ENCODE measurements at regions of chr9 and their contacts with region 1.

Region 1: GRCh38 chr9:136122425-136123383 is 4.0 kb upstream of the TMEM250 start:
- DNase-seq: peak; percentile 89
- ATAC-seq: peak; percentile 64

Region 2: GRCh38 chr9:135969064-135969683 is 153.5 kb before region 1 on chr9:
- intact Hi-C with region 1: loop called (anchors 5 kb)
- DNase-seq: no peak
- ATAC-seq: no peak

Region 3: GRCh38 chr9:136089697-136090045 is 33.0 kb before region 1 on chr9:
- intact Hi-C with region 1: loop called (anchors 2 kb)
- DNase-seq: no peak
- ATAC-seq: no peak

Measured in sciatic nerve (tissue), 2 donors.